ENCODE measurements at regions of chr5 and their contacts with region 1.

Region 1: GRCh38 chr5:80987078-80987766 is 27.1 kb downstream of the RASGRF2 start:
- DNase-seq: no peak
- ATAC-seq: peak; percentile 26
- H3K4me3 Mint-ChIP-seq: no peak overlapping the region
- H3K27ac Mint-ChIP-seq: peak overlapping the region; percentile 86
- H3K4me1 Mint-ChIP-seq: peaks cover 60% of the 10 kb centered on the region
- H3K27me3 Mint-ChIP-seq: no peaks in the 10 kb centered on the region
- CTCF ChIP-seq: no peak

Region 2: DNA sequence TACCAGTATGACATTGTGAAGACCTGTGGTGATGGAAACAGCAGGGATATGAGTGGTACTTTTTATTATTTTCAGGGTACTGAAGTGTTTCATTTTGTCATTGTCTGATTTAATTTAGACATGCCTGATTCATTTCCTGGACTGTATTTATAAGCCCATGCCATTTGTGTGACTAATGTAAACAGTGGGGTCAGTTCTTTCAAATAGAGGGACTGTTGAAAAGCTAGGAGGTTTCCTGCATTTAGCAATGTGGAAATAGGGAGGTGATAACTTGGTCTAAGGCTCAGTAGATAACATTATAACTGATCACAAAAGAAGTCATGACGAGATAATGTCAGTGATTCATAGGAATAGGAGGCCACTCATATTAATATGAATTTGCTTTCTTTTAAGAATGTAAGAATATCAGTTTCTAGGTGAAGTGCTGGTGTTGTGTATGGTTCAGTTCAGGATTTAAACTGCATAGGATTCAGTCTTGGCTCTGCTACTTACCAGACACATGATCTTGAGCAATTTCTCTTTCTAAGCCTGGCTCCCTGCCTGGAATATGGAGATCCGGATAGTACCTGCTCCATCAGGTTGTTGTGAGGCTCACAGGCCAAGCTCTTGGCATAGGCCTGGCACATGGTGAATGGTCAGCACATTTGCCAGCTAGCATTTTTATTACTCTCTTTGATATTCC is 19.6 kb before region 1 on chr5:
- CTCF ChIA-PET with region 1: no interaction called
- POLR2A ChIA-PET with region 1: no interaction called
- intact Hi-C with region 1: no loop called
- DNase-seq: no peak
- ATAC-seq: peak; percentile 61
- H3K4me3 Mint-ChIP-seq: no peak overlapping the region
- H3K27ac Mint-ChIP-seq: peak overlapping the region; percentile 84
- H3K4me1 Mint-ChIP-seq: peaks cover 63% of the 10 kb centered on the region
- H3K27me3 Mint-ChIP-seq: no peaks in the 10 kb centered on the region
- CTCF ChIP-seq: no peak

Region 3: DNA sequence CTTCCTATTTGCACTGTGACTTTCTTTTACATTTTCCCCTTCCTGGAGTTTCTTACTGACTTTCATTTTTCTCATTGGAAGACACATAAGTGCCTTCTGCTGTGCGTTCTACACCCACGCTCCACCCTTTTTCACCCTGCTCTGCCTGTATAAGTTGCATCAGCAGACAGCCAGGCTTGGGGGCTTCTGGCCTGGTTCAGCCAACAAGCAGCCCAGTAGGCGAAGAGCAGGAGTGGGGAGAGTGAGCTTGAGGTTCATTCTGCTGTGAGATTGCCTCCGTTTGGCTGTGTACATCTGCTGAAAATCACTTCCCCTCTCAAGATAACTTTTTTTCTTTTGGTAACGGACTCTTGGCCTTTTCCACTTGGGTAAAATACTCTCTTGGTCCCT is 11.4 kb after region 1 on chr5:
- CTCF ChIA-PET with region 1: interaction called, 6 read pairs
- POLR2A ChIA-PET with region 1: interaction called, 11 read pairs
- intact Hi-C with region 1: no loop called
- DNase-seq: peak; percentile 83
- ATAC-seq: peak; percentile 82
- H3K4me3 Mint-ChIP-seq: peak overlapping the region; percentile 75
- H3K27ac Mint-ChIP-seq: peak overlapping the region; percentile 98
- H3K4me1 Mint-ChIP-seq: peaks cover 71% of the 10 kb centered on the region
- H3K27me3 Mint-ChIP-seq: no peaks in the 10 kb centered on the region
- CTCF ChIP-seq: no peak